ENCODE measurements at regions of chr1 and their contacts with region 1.

Region 1: DNA sequence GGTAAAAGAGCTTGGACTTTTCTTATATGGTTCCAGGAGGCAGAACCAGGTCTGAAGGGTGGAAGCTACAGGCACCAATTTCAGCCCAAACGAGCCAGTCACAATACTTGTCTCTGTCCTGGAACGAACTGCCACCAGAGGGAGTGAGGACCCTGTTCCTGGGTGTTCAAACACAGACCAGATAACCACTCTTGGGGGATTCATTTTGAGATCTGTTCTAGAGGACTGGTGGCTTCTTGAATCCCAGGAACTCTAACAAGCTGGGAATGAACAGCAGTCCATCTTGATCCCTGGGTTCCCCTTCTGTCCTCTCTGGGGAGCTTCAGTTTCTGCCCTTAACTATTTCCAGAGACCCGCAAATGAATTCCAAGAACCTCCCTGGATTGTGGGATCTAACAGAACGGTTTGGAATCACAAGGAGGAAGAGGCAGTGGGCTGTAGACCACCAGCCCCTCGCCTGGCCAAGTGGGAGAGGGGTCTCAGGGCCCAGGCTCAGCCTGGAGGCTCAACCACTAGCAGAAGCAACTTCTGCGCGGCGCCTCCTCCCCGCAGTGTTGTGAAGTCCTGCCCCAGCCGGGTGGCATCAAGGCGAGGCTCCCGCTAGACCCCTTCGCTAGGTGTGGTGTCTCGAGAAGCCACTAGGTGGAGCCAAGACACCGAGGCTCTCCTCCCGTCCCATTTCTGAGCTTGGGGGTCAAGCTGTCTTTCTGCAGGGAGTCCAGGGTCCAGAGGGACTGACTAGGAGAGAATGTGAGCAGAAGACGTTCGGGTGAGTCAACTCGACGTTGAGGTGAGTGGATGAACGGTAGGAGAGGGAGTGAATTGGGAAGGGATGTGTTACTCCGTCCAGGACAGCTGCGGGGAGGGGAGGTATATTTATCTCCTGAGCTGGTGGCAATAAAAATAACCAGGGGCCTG is 12.1 kb upstream of the NES start:
- DNase-seq: peak; percentile 85
- H3K4me3 ChIP-seq: peak overlapping the region; percentile 39 to 51
- H3K27ac ChIP-seq: peak overlapping the region in 1 of 2 experiments; percentile 86; a peak in 2 of 4 replicates
- H3K4me1 ChIP-seq: peaks cover 13 to 52% of the 10 kb centered on the region in 2 experiments; a peak in 3 of 4 replicates
- H3K27me3 ChIP-seq: no peaks in the 10 kb centered on the region
- CTCF ChIP-seq: peak; percentile 74
- EP300 ChIP-seq: no peak
- RAD21 ChIP-seq: peak; percentile 99

Region 2: DNA sequence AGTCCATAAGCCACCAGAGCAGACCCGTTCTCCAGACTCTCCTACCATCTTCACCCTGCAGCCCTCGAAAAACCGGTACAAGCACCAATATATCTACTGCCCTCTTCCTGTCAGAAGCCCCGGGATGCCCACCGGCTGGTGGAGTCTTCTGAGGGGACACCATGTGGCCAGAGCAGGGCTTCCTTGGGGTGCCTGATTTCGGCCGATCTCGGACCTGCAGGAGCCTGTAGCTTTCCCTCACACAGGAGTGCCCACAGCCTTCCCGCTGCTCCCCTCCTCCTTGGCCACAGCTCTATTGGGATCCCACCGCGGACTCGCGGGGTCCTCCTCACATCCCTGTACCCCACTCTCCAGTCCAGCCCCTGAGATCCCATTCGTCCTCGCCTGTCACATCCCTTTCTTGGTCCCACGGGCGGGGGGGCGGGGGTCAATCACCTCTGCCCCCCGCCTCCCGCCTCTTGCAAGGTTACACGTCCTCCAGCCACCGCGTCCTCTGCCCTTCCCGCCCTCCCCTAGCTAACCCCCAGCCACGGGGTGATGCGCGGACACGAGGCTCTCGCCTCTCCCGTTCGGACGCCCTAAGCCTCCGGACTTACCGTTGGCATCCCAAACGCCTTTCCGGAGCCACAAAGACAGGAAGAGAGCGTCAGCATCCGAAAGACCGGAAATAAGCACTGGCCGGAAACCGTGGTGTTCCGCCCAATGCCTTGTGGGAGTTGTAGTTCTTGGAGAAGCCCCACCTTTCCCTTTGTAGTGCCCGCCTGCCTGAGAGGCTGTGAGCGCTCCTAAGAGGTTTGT is 668.8 kb before region 1 on chr1 and contains the start of gene SSR2:
- CTCF ChIA-PET with region 1: no interaction called
- POLR2A ChIA-PET with region 1: no interaction called
- DNase-seq: peak; percentile 89
- H3K4me3 ChIP-seq: peak within 1 kb of the TSS; percentile 67 to 96
- H3K27ac ChIP-seq: peak within 1 kb of the TSS; percentile 44 to 82; a peak in 3 of 4 replicates
- H3K4me1 ChIP-seq: peaks cover 7 to 10% of the 10 kb centered on the region in 2 experiments; a peak in 3 of 4 replicates
- H3K27me3 ChIP-seq: no peaks in the 10 kb centered on the region
- CTCF ChIP-seq: 0 out of 2 replicates have a peak, but pooled peaks have one; percentile 7
- EP300 ChIP-seq: peak in 1 of 2 experiments; percentile 17; a peak in 1 of 4 replicates
- RAD21 ChIP-seq: no peak
- polyA plus RNA-seq, gene SSR2: 1,136 and 1,763 TPM in 2 replicates

Region 3: DNA sequence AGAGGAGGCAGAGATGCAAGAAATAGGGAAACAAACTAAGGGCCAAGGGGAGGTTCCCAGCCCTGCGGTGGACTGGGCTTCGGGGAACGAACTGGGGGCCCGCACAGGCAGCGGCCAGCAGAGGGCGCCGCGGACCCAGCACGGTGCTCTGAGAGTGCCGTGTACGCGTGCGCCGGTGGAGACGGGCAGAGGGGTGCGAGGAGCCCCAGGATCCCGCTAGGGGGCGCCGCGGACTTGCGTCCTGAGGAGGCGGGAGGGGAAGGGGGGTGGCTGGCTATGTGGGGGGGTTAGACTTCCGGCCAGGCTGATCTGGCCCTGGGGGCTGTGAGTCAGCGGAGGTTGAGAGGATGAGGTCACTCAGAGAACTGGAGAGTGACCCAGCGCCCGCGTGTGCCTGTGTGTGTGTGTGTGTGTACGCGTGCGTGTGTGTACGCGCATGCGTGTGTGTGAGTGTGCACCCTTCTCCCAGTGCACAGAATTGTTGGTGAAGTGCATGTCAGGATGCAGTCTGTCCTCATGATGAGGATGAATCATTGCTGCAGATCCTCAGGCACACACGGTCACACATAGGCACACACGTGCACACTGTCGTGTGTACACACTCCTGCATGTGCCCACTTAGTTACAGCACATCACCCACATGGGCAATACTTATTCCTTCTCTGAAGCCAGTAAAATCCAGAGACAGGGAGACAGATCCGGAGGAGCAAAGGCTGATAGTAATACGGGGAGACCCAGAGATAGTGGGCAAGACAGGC is 29.1 kb before region 1 on chr1:
- CTCF ChIA-PET with region 1: interaction called, 682 read pairs
- POLR2A ChIA-PET with region 1: interaction called, 4 read pairs
- DNase-seq: peak; percentile 99
- H3K4me3 ChIP-seq: peak overlapping the region; percentile 34 to 54; a peak in 2 of 4 replicates
- H3K27ac ChIP-seq: peak overlapping the region; percentile 72 to 87
- H3K4me1 ChIP-seq: peaks cover 44 to 48% of the 10 kb centered on the region in 2 experiments; a peak in 3 of 4 replicates
- H3K27me3 ChIP-seq: no peaks in the 10 kb centered on the region
- CTCF ChIP-seq: peak; percentile 99
- EP300 ChIP-seq: peak in 1 of 2 experiments; percentile 37; a peak in 1 of 4 replicates
- RAD21 ChIP-seq: peak; percentile 90

Region 4: GRCh38 chr1:156728597-156729462 is 39.5 kb after region 1 on chr1 and contains the start of gene ISG20L2:
- CTCF ChIA-PET with region 1: interaction called, 2,702 read pairs
- POLR2A ChIA-PET with region 1: interaction called, 39 read pairs
- DNase-seq: peak; percentile 92
- H3K4me3 ChIP-seq: peak within 1 kb of the TSS; percentile 76 to 87
- H3K27ac ChIP-seq: peak within 1 kb of the TSS; percentile 83 to 88
- H3K4me1 ChIP-seq: peaks cover 28 to 56% of the 10 kb centered on the region in 2 experiments
- H3K27me3 ChIP-seq: no peaks in the 10 kb centered on the region
- CTCF ChIP-seq: no peak
- EP300 ChIP-seq: no peak
- RAD21 ChIP-seq: no peak
- polyA plus RNA-seq, gene ISG20L2: 31.6 and 44.3 TPM in 2 replicates

Region 5: GRCh38 chr1:156767101-156767878 is 78.0 kb after region 1 on chr1 and contains the start of gene PRCC:
- CTCF ChIA-PET with region 1: interaction called, 21 read pairs
- POLR2A ChIA-PET with region 1: interaction called, 6 read pairs
- DNase-seq: peak; percentile 87
- H3K4me3 ChIP-seq: peak within 1 kb of the TSS; percentile 72 to 86
- H3K27ac ChIP-seq: peak within 1 kb of the TSS; percentile 77 to 90
- H3K4me1 ChIP-seq: peaks cover 23 to 26% of the 10 kb centered on the region in 2 experiments; a peak in 3 of 4 replicates
- H3K27me3 ChIP-seq: no peaks in the 10 kb centered on the region
- CTCF ChIP-seq: 0 out of 2 replicates have a peak, but pooled peaks have one; percentile 7
- EP300 ChIP-seq: peak; percentile 10 to 20; a peak in 2 of 4 replicates
- RAD21 ChIP-seq: peak; percentile 29; the same call in 1 of the 2 replicates
- polyA plus RNA-seq, gene PRCC: 39.2 and 51.8 TPM in 2 replicates

Region 6: GRCh38 chr1:156838981-156839410 is 149.7 kb after region 1 on chr1:
- CTCF ChIA-PET with region 1: interaction called, 18 read pairs
- POLR2A ChIA-PET with region 1: no interaction called
- DNase-seq: peak; percentile 81
- H3K4me3 ChIP-seq: no peak overlapping the region; a peak in 1 of 4 replicates
- H3K27ac ChIP-seq: peak overlapping the region in 1 of 2 experiments; percentile 43; a peak in 2 of 4 replicates
- H3K4me1 ChIP-seq: peaks cover 0 to 54% of the 10 kb centered on the region in 2 experiments; a peak in 2 of 4 replicates
- H3K27me3 ChIP-seq: peaks cover 9% of the 10 kb centered on the region; the same call in 1 of the 2 replicates
- CTCF ChIP-seq: peak; percentile 94
- EP300 ChIP-seq: no peak; a peak in 1 of 4 replicates
- RAD21 ChIP-seq: peak; percentile 84

Region 7: DNA sequence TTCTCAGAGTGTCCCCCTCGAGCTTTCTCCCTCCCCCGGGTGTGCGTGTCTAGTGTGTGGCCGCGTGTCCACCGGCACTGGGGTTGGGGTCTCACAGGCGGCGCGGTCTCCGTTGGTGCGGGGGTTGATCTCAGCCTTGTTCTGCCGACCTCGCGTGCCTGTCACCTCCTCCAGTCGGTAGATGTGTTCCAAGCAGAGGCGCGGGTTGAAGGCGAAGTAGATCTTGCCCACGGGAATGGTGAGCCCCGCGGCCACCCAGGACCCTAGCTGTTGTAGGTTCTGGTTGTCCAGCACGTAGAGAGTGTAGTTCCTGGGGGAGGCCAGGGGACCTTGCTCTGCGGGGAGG is 159.8 kb after region 1 on chr1:
- CTCF ChIA-PET with region 1: no interaction called
- POLR2A ChIA-PET with region 1: no interaction called
- DNase-seq: no peak
- H3K4me3 ChIP-seq: no peak overlapping the region
- H3K27ac ChIP-seq: no peak overlapping the region
- H3K4me1 ChIP-seq: peaks cover 0 to 32% of the 10 kb centered on the region in 2 experiments; a peak in 3 of 4 replicates
- H3K27me3 ChIP-seq: no peaks in the 10 kb centered on the region
- CTCF ChIP-seq: no peak
- EP300 ChIP-seq: no peak
- RAD21 ChIP-seq: no peak

Region 8: DNA sequence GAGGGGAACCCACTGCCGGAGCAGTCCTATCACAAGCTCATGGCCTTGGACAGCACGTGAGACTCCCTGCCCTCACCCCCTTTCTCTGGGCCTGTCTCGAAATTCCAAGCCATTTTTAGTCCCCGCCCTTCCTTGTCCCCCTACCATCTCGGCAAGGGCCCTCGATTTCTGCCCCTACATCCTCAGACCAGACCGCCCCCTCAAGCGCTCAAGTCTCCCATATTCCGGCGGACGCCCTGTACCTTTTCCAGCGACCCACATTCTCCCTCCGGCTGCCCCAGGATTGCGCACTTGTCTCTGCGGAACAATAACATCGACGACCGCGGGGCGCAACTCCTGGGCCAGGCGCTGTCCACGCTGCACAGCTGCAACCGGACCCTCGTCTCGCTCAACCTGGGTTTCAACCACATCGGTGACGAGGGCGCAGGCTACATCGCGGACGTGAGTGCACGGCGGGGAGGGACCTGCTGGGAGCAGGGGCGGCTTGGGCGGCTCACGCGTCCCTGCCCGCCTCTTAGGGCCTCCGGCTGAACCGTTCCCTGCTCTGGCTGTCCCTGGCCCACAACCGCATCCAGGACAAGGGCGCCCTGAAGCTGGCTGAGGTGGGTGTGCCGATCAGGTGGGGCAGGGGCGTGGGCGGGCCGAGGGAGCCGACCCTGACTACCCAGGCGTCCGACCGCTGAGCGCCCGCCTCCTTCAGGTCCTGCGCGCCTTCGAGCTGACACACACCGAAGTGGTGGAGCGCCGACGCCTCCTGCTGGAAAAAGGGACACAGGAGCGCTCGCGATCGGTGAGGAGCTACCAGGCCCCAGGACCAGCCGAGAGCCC is 238.1 kb after region 1 on chr1:
- CTCF ChIA-PET with region 1: interaction called, 65 read pairs
- POLR2A ChIA-PET with region 1: interaction called, 4 read pairs
- DNase-seq: peak; percentile 91
- H3K4me3 ChIP-seq: peak overlapping the region; percentile 37 to 44; a peak in 3 of 4 replicates
- H3K27ac ChIP-seq: peak overlapping the region in 1 of 2 experiments; percentile 6; a peak in 1 of 4 replicates
- H3K4me1 ChIP-seq: peaks cover 5 to 25% of the 10 kb centered on the region in 2 experiments; a peak in 2 of 4 replicates
- H3K27me3 ChIP-seq: no peaks in the 10 kb centered on the region
- CTCF ChIP-seq: peak; percentile 84
- EP300 ChIP-seq: no peak
- RAD21 ChIP-seq: peak; percentile 94

Region 9: GRCh38 chr1:157691285-157691920 is 1002.1 kb after region 1 on chr1:
- CTCF ChIA-PET with region 1: no interaction called
- POLR2A ChIA-PET with region 1: no interaction called
- DNase-seq: peak; percentile 42
- H3K4me3 ChIP-seq: no peak overlapping the region
- H3K27ac ChIP-seq: no peak overlapping the region
- H3K4me1 ChIP-seq: no peaks in the 10 kb centered on the region; a peak in 1 of 4 replicates
- H3K27me3 ChIP-seq: peaks cover 5% of the 10 kb centered on the region
- CTCF ChIP-seq: peak; percentile 59
- EP300 ChIP-seq: no peak
- RAD21 ChIP-seq: peak; percentile 37